ENCODE measurements at regions of chr2 and their contacts with region 1.

Region 1: DNA sequence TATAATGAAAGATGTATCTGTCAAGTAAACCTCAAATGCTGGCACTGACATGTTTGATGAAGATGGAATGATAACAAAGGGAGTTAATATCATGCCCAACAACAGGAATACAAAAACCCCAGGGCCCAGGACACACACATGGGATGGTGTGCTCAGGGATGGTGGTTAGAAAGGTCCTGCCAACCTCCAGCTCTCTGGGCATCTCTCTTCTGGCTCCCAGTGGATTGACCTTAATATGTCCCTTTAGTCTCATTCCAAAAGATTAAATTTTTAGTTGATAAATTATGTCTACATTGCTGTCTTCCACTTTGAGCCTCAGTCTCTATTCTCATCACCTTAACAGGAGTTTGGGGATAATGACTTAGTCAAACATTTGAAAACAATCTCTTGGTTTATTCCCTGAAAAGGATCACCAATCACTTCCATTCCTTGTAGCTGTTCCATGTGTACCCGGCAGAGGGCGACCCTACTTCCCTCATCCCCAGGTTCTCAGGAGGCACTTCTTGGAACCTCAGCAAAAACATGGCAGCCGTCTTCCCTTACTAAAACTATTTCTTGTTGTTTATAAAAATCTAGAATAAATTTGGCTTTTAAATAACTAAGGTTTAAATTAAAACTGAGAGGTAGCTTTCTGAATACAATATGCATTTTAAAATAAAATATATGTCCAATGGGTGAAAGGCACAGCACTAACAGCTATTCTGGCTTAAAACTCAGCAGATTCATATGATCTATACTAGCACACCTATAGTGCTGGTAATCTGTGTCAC is 29.6 kb downstream of the MCEE start:
- H3K4me3 Mint-ChIP-seq: no peak overlapping the region
- H3K27ac Mint-ChIP-seq: no peak overlapping the region
- H3K4me1 Mint-ChIP-seq: peaks cover 5% of the 10 kb centered on the region
- H3K27me3 Mint-ChIP-seq: no peaks in the 10 kb centered on the region

Region 2: GRCh38 chr2:70977605-70978205 is 122.7 kb before region 1 on chr2:
- intact Hi-C with region 1: no loop called
- H3K4me3 Mint-ChIP-seq: peak overlapping the region; percentile 84
- H3K27ac Mint-ChIP-seq: peak overlapping the region; percentile 77
- H3K4me1 Mint-ChIP-seq: peaks cover 17% of the 10 kb centered on the region
- H3K27me3 Mint-ChIP-seq: peaks cover 29% of the 10 kb centered on the region

Region 3: GRCh38 chr2:71068218-71069035 is 32.0 kb before region 1 on chr2 and contains the start of gene NAGK:
- intact Hi-C with region 1: no loop called
- H3K4me3 Mint-ChIP-seq: peak within 1 kb of the TSS; percentile 85
- H3K27ac Mint-ChIP-seq: peak within 1 kb of the TSS; percentile 96
- H3K4me1 Mint-ChIP-seq: peaks cover 77% of the 10 kb centered on the region
- H3K27me3 Mint-ChIP-seq: no peaks in the 10 kb centered on the region

Region 4: DNA sequence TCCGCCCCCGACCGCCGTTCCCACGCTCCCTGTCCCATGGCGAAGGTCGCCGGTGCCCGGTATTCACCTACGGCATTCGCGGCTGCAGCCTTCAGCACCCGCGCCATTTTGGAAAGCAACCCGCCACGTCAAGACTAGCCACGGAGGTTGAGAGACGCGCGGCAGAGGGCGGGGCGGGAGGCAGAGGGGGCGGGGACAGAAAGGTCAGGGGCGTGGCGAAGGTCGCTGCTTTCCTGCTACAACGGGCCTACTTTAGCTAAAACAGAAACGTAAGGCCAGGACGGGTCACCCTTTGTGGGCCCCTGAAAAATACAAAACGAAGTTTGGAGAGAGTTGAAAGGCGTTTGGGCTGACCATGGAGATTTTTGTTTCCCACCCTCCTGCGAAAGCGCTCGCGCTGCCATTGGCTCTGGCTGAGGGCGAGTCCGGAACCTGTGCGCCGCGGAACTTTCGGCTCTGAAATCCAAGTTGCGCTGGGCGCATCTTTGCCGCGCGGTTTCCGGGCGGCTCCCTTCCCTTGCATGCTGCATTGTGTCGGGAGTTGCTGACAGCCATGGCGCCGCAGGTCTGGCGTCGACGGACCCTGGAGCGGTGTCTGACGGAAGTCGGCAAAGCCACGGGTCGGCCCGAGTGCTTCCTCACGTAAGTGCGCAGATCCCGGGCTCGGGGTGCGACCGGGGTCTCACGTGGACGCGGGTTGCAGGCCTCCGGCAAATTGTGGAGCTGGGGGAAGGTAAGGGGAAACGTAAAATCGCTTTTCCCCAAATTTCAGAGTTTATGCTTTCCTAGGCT is 29.9 kb after region 1 on chr2 and contains the starts of genes MCEE and MPHOSPH10:
- intact Hi-C with region 1: loop called (anchors 1 kb)
- H3K4me3 Mint-ChIP-seq: no peak within 1 kb of the TSS
- H3K27ac Mint-ChIP-seq: no peak within 1 kb of the TSS
- H3K4me1 Mint-ChIP-seq: no peaks in the 10 kb centered on the region
- H3K27me3 Mint-ChIP-seq: no peaks in the 10 kb centered on the region